Calu3 (cell line): ENCODE measurements at regions of chr12 and their contacts with region 1.

Region 1: GRCh38 chr12:14716848-14717444 is 20.5 kb upstream of the GUCY2C start:
- DNase-seq: peak; percentile 55
- H3K4me3 Mint-ChIP-seq: no peak overlapping the region
- H3K27ac Mint-ChIP-seq: no peak overlapping the region
- H3K4me1 Mint-ChIP-seq: no peaks in the 10 kb centered on the region
- H3K27me3 Mint-ChIP-seq: no peaks in the 10 kb centered on the region
- CTCF ChIP-seq: peak; percentile 38

Region 2: DNA sequence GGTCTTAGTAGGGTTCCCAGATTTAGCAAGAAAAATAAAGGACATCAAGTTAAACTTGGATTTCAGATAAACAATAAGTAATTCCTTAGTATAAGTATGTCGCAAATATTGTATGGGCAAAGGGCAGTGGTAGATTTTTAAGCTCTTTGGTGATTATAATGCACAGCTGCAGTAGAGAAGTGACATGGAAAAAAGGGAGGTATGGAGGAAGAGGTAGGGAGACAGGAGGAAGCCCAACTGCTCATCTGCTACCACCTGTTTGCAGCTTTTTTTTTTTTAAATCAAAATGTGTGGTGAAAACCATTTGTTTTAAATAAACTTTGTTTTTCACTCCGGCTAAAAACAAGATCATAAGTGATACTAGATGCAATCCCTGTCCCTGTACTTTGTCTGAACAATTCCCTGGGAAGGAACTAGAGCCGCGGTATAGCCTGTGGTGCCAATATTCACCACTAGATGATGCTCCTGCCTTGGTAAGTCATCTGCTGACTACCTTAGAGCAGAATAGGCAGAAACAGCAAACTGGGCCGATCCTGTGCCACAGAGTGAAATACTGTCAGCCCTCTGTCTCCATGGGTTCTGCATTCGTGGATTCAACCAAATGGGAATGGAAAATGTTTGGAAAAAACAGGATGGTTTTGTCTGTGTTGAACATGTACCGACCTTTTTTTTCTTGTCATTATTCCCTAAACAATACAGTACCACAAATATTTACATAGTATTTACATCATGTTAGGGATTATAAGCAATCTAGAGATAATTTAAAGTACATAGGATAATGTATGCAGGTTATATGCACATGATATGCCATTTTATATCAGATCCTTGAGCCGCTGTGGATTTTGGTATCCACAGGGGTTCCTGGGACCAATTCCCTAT is 86.9 kb before region 1 on chr12:
- CTCF ChIA-PET with region 1: no interaction called
- intact Hi-C with region 1: loop called (anchors 2 kb)
- DNase-seq: peak; percentile 71
- H3K4me3 Mint-ChIP-seq: no peak overlapping the region
- H3K27ac Mint-ChIP-seq: no peak overlapping the region
- H3K4me1 Mint-ChIP-seq: no peaks in the 10 kb centered on the region
- H3K27me3 Mint-ChIP-seq: no peaks in the 10 kb centered on the region
- CTCF ChIP-seq: peak; percentile 84